Activated CD8-positive, alpha-beta T cell treated with anti-CD3 and anti-CD28 coated beads for 36 hours (primary cell): ENCODE measurements at regions of chr16 and their contacts with region 1.

Region 1: GRCh38 chr16:4586291-4586690 is 28.4 kb downstream of the UBALD1 start:
- DNase-seq: no peak
- ATAC-seq: no peak
- H3K4me3 Mint-ChIP-seq: no peak overlapping the region
- H3K27ac Mint-ChIP-seq: no peak overlapping the region
- H3K4me1 Mint-ChIP-seq: peaks cover 3% of the 10 kb centered on the region
- H3K27me3 Mint-ChIP-seq: peaks cover 4% of the 10 kb centered on the region
- CTCF ChIP-seq: no peak

Region 2: GRCh38 chr16:4194661-4195060 is 391.6 kb before region 1 on chr16:
- CTCF ChIA-PET with region 1: no interaction called
- POLR2A ChIA-PET with region 1: no interaction called
- intact Hi-C with region 1: no loop called
- DNase-seq: no peak
- ATAC-seq: no peak
- H3K4me3 Mint-ChIP-seq: no peak overlapping the region
- H3K27ac Mint-ChIP-seq: no peak overlapping the region
- H3K4me1 Mint-ChIP-seq: no peaks in the 10 kb centered on the region
- H3K27me3 Mint-ChIP-seq: no peaks in the 10 kb centered on the region
- CTCF ChIP-seq: no peak

Region 3: GRCh38 chr16:4500272-4500671 is 86.0 kb before region 1 on chr16:
- CTCF ChIA-PET with region 1: interaction called, 13 read pairs
- POLR2A ChIA-PET with region 1: interaction called, 3 read pairs
- intact Hi-C with region 1: no loop called
- DNase-seq: peak; percentile 25
- ATAC-seq: peak; percentile 77
- H3K4me3 Mint-ChIP-seq: no peak overlapping the region
- H3K27ac Mint-ChIP-seq: no peak overlapping the region
- H3K4me1 Mint-ChIP-seq: peaks cover 81% of the 10 kb centered on the region
- H3K27me3 Mint-ChIP-seq: no peaks in the 10 kb centered on the region
- CTCF ChIP-seq: no peak

Region 4: GRCh38 chr16:4561596-4561995 is 24.7 kb before region 1 on chr16:
- CTCF ChIA-PET with region 1: interaction called, 15 read pairs
- POLR2A ChIA-PET with region 1: no interaction called
- intact Hi-C with region 1: no loop called
- DNase-seq: no peak
- ATAC-seq: no peak
- H3K4me3 Mint-ChIP-seq: no peak overlapping the region
- H3K27ac Mint-ChIP-seq: no peak overlapping the region
- H3K4me1 Mint-ChIP-seq: peaks cover 3% of the 10 kb centered on the region
- H3K27me3 Mint-ChIP-seq: no peaks in the 10 kb centered on the region
- CTCF ChIP-seq: no peak

Region 5: GRCh38 chr16:4572715-4573114 is 13.6 kb before region 1 on chr16:
- CTCF ChIA-PET with region 1: interaction called, 15 read pairs
- POLR2A ChIA-PET with region 1: interaction called, 3 read pairs
- intact Hi-C with region 1: no loop called
- DNase-seq: no peak
- ATAC-seq: no peak
- H3K4me3 Mint-ChIP-seq: no peak overlapping the region
- H3K27ac Mint-ChIP-seq: no peak overlapping the region
- H3K4me1 Mint-ChIP-seq: no peaks in the 10 kb centered on the region
- H3K27me3 Mint-ChIP-seq: no peaks in the 10 kb centered on the region
- CTCF ChIP-seq: no peak

Region 6: DNA sequence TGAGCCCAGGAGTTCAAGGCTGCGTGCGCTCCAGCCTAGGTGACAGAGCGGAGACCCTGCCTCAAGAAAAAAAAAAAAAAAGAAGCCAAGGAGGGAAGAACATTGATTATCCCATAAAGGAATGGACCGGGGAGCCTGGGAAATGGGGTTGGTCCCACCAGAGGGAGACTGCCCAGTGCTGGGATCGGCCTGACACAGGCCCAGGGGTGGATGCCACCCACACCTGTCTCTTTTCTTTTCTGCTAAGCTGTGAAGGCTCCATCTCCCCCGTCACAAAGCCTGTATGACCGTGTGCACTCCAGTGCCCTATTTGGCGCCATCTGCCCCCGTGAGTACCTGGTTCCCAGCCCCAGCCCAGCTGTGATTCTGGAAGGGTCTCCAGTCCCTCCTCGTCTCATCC is 12.7 kb after region 1 on chr16:
- CTCF ChIA-PET with region 1: interaction called, 15 read pairs
- POLR2A ChIA-PET with region 1: no interaction called
- intact Hi-C with region 1: no loop called
- DNase-seq: no peak
- ATAC-seq: no peak
- H3K4me3 Mint-ChIP-seq: no peak overlapping the region
- H3K27ac Mint-ChIP-seq: no peak overlapping the region
- H3K4me1 Mint-ChIP-seq: no peaks in the 10 kb centered on the region
- H3K27me3 Mint-ChIP-seq: no peaks in the 10 kb centered on the region
- CTCF ChIP-seq: no peak

Region 7: GRCh38 chr16:4634768-4635167 is 48.5 kb after region 1 on chr16:
- CTCF ChIA-PET with region 1: no interaction called
- POLR2A ChIA-PET with region 1: no interaction called
- intact Hi-C with region 1: no loop called
- DNase-seq: no peak
- ATAC-seq: no peak
- H3K4me3 Mint-ChIP-seq: no peak overlapping the region
- H3K27ac Mint-ChIP-seq: no peak overlapping the region
- H3K4me1 Mint-ChIP-seq: peaks cover 20% of the 10 kb centered on the region
- H3K27me3 Mint-ChIP-seq: no peaks in the 10 kb centered on the region
- CTCF ChIP-seq: no peak

Region 8: GRCh38 chr16:4882633-4883285 is 296.5 kb after region 1 on chr16:
- CTCF ChIA-PET with region 1: no interaction called
- POLR2A ChIA-PET with region 1: no interaction called
- intact Hi-C with region 1: no loop called
- DNase-seq: no peak
- ATAC-seq: no peak
- H3K4me3 Mint-ChIP-seq: no peak overlapping the region
- H3K27ac Mint-ChIP-seq: no peak overlapping the region
- H3K4me1 Mint-ChIP-seq: no peaks in the 10 kb centered on the region
- H3K27me3 Mint-ChIP-seq: no peaks in the 10 kb centered on the region
- CTCF ChIP-seq: no peak